ENCODE measurements at regions of chr19 and their contacts with region 1.

Region 1: DNA sequence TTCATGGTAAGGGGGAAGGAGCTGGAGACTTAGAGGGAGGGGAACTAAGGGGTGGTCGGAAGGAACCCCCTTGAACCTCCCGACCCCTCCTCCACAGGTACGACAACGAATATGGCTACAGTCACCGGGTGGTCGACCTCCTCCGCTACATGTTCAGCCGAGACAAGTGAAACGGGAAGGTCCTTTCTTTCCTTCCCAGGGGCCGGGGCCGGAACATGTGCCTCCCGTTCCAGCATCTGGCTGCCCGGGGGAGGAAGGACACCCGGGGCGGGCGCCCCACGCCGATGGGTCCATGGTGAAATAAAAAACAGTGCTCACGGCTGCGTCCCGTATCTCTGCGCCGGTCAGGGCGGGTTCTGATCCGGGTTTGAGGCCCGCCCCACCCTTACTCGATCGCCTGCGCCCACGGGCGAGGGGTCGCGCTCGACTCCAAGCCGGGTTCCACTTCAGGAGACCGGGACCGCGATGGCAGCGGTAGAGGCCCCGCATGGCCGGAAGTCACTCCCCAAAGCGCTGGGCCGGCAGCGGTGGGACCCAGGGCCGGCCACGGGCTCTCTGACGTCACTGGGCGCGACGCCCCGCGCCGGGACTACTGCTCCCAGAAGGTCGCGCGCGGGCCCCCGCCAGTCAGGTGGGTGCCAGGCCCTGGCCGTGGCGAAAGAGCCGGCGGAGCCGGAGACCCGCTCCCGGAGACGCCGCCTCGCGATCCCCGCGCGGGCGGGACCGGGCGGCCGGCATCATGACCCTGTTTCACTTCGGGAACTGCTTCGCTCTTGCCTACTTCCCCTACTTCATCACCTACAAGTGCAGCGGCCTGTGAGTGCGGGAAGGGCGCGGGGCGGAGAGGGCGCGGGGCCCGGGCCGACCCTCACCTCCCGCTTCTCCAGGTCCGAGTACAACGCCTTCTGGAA is at the start of gene TMEM147:
- DNase-seq: peak; percentile 85 to 96 (median 92)
- H3K4me3 ChIP-seq: peak within 1 kb of the TSS; percentile 66 to 100 (median 97)
- H3K27ac ChIP-seq: peak within 1 kb of the TSS in 56 of 59 donors; percentile 25 to 91 (median 80)
- H3K27me3 ChIP-seq: no peaks in the 10 kb centered on the region
- CTCF ChIP-seq: peak in 38 of 56 donors; percentile 5 to 63 (median 28)
- total RNA-seq, gene TMEM147: 38.2 to 73.0 (median 54.7) TPM

Region 2: DNA sequence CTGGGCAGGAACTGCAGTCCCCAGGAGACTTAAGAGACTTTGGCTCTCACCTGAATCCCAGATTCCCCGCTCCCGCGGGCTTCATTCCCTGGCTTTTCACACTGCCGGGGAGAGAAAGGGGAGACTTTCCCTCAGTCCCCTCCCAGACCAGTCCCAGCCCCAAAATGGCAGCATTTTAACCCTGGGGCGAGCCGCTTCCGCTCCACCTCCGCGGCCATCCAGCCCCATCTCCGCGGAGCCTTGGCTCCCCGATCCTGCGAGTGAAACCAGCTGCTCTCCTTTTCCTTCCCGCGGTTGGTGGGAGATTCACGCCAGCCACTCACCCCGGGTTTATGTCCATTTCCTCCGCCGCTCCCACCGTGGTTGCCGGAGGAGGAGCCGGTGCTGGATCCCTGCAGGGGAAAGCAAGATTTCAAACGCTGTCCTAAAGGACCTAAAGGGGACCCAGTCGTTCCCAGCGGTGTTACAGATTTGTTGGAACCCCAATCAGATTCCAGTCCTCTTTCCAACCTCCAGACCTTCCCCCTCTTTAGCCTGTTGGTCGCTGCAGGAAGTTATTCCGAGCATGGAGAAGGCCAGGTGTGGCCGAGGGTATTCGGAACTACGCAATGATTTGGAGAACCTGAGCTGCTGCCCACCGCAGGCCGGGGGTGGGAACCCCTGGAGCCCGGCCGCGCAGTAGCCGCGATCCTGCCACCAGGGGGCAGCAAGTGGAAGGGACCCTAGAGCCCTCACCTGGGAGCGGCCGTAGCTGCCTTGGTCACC is 35.2 kb before region 1 on chr19:
- intact Hi-C with region 1: no loop called
- DNase-seq: peak; percentile 42 to 78 (median 63)
- H3K4me3 ChIP-seq: peak overlapping the region; percentile 19 to 70 (median 53)
- H3K27ac ChIP-seq: peak overlapping the region in 31 of 59 donors; percentile 4 to 72 (median 38)
- H3K27me3 ChIP-seq: peaks cover 0 to 50% (median 7%) of the 10 kb centered on the region in 45 donors
- CTCF ChIP-seq: peak; percentile 64 to 93 (median 86)

Region 3: DNA sequence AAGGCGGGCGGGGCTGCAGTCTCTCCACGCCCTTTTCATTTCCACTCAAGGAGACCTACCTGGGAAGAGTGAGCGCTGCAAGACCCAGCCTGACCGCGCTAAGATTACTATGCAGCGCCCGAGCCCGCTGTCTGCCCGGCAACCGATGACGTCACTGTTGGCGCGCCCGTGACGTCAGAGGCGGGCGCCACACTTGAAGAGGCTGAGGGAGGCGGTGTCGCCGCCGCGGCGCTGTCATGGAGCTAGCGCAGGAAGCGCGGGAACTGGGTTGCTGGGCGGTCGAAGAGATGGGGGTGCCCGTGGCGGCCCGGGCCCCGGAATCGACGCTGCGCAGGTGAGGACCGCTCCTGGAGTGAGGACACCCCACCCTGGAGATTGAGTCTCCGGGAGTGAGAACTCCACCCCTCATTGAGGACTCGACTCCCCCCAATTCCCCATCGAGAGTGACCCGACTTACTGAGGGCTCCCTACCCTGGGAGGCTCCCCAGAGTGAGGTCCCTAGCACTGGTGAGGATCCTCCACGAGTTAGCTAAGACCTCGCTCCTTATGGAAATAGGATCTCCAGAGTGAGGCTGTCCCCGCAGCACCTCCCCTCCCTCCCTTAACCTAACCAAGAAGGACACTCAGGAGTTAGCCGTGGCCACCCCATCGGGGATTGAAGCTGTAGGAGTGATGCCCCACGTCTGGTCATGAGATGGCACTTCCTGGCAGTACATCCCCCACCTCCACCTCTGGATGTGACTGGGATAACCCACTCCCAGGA is 67.5 kb after region 1 on chr19 and contains the start of gene HAUS5:
- intact Hi-C with region 1: loop called (anchors 5 kb)
- DNase-seq: peak; percentile 89 to 96 (median 94)
- H3K4me3 ChIP-seq: peak within 1 kb of the TSS; percentile 55 to 95 (median 78)
- H3K27ac ChIP-seq: peak within 1 kb of the TSS in 39 of 59 donors; percentile 3 to 84 (median 54)
- H3K27me3 ChIP-seq: no peaks in the 10 kb centered on the region
- CTCF ChIP-seq: peak in 31 of 56 donors; percentile 6 to 60 (median 32)
- total RNA-seq, gene HAUS5: 5.1 to 22.1 (median 13.4) TPM

Region 4: GRCh38 chr19:35623327-35624010 is 78.2 kb after region 1 on chr19:
- intact Hi-C with region 1: loop called in 1 of 2 experiments (anchors 5 kb)
- DNase-seq: peak in 5 of 10 donors; percentile 29 to 82 (median 63)
- H3K4me3 ChIP-seq: no peak overlapping the region
- H3K27ac ChIP-seq: no peak overlapping the region
- H3K27me3 ChIP-seq: no peaks in the 10 kb centered on the region
- CTCF ChIP-seq: no peak

Region 5: GRCh38 chr19:35648017-35648961 is 103.0 kb after region 1 on chr19 and contains the start of gene COX6B1:
- intact Hi-C with region 1: loop called in 1 of 2 experiments (anchors 5 kb)
- DNase-seq: peak; percentile 80 to 99 (median 96)
- H3K4me3 ChIP-seq: peak within 1 kb of the TSS; percentile 61 to 99 (median 88)
- H3K27ac ChIP-seq: peak within 1 kb of the TSS in 57 of 59 donors; percentile 23 to 92 (median 80)
- H3K27me3 ChIP-seq: peaks cover 0 to 1% (median 0%) of the 10 kb centered on the region in 45 donors
- CTCF ChIP-seq: peak in 16 of 56 donors; percentile 2 to 48 (median 19)
- total RNA-seq, gene COX6B1: 243 to 552 (median 394) TPM

Region 6: DNA sequence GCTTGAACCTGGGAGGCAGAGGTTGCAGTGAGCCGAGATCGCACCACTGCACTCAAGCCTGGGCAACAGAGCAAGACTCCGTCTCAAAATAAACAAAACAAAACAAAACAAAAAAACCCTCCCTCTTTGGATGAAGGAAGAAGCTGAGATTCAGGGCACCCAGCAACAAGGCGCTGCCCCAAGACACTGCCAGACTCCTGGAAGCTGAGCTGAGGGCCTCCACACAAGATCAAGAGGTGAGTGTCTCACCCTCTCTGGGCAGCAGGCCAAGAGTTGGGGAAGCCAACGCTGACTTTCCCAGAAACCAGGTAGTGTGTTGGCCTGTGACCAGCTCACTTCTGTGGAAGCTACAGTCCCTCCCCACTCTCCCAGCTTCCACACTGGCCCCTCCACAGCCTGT is 366.5 kb after region 1 on chr19:
- intact Hi-C with region 1: no loop called
- DNase-seq: no peak
- H3K4me3 ChIP-seq: no peak overlapping the region
- H3K27ac ChIP-seq: no peak overlapping the region
- H3K27me3 ChIP-seq: no peaks in the 10 kb centered on the region
- CTCF ChIP-seq: no peak